ENCODE measurements at regions of chr1 and their contacts with region 1.

Region 1: GRCh38 chr1:220294846-220295301 is 22.6 kb upstream of the RAB3GAP2 start:
- DNase-seq: no peak

Region 2: GRCh38 chr1:220511768-220512167 is 216.9 kb after region 1 on chr1:
- intact Hi-C with region 1: loop called (anchors 5 kb)
- DNase-seq: no peak

Region 3: DNA sequence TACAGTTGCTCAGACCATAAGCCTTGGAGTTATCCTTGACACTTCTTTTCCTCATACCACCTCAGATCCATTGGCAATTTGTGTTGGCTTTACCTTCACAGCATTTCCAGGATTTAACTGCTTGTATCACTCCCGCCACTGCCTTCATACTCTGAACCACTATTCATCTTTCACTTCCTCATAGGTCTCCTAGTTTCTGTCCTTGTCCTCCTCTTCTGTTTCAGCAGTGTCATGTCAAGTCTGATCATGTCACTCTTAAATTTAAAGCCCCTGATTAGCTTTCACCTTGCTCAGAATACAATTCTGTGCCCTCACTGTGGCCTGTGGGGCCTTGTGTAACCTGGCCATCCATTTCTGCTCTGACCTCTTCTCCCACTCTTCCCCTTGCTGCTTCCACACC is 360.6 kb after region 1 on chr1:
- intact Hi-C with region 1: loop called (anchors 10 kb)
- DNase-seq: no peak

Measured in cardiac septum (tissue), 1 donor.